Activated CD4-positive, alpha-beta T cell treated with anti-CD3 and anti-CD28 coated beads, Interleukin-2, amount 10 ng/mL, durations not matched to agents 24 days and 14 days (primary cell): ENCODE measurements at regions of chr4 and their contacts with region 1.

Region 1: GRCh38 chr4:41882625-41883347 is 52.4 kb upstream of the TMEM33 start:
- DNase-seq: peak; percentile 83
- H3K4me3 Mint-ChIP-seq: peak overlapping the region; percentile 23
- H3K27ac Mint-ChIP-seq: no peak overlapping the region
- H3K4me1 Mint-ChIP-seq: peaks cover 4% of the 10 kb centered on the region
- H3K27me3 Mint-ChIP-seq: peaks cover 60% of the 10 kb centered on the region

Region 2: GRCh38 chr4:41012293-41012692 is 870.5 kb before region 1 on chr4:
- intact Hi-C with region 1: no loop called
- DNase-seq: no peak
- H3K4me3 Mint-ChIP-seq: no peak overlapping the region
- H3K27ac Mint-ChIP-seq: no peak overlapping the region
- H3K4me1 Mint-ChIP-seq: no peaks in the 10 kb centered on the region
- H3K27me3 Mint-ChIP-seq: no peaks in the 10 kb centered on the region

Region 3: GRCh38 chr4:41281038-41281634 is 601.6 kb before region 1 on chr4:
- intact Hi-C with region 1: loop called (anchors 1 kb)
- DNase-seq: peak; percentile 81
- H3K4me3 Mint-ChIP-seq: no peak overlapping the region
- H3K27ac Mint-ChIP-seq: no peak overlapping the region
- H3K4me1 Mint-ChIP-seq: no peaks in the 10 kb centered on the region
- H3K27me3 Mint-ChIP-seq: no peaks in the 10 kb centered on the region

Region 4: DNA sequence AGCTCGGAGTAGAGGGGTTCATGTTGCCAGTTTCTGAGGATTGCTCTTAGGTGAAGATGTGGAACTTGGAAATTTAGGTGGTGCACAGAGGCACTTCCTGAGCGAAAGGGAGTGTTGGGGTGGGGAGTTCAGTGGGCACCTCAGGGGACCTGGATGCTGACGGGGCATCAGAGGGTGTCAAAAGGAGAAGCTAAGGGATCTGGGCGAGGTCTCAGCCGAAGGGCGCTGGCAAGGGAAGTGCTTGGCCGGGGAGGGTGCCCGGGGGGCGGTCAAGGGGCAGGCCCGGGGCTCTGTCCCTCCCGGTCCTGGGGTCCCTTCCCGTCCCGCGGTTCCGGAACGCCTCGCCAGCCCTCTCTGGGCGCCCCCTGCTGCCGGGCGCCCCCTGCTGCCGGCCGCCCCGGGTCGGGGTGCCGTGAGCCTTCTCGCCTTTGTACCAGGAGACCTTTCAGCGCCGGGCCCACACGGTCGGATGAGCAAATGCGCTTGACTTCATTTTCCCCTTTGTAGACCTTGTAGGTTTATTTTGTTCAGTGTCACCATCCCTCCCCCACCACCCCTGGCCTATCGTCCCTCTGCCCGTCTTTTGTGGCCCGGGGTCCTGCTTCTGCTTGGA is 131.2 kb before region 1 on chr4:
- intact Hi-C with region 1: loop called (anchors 2 kb)
- DNase-seq: no peak
- H3K4me3 Mint-ChIP-seq: no peak overlapping the region
- H3K27ac Mint-ChIP-seq: no peak overlapping the region
- H3K4me1 Mint-ChIP-seq: no peaks in the 10 kb centered on the region
- H3K27me3 Mint-ChIP-seq: peaks cover 75% of the 10 kb centered on the region

Region 5: DNA sequence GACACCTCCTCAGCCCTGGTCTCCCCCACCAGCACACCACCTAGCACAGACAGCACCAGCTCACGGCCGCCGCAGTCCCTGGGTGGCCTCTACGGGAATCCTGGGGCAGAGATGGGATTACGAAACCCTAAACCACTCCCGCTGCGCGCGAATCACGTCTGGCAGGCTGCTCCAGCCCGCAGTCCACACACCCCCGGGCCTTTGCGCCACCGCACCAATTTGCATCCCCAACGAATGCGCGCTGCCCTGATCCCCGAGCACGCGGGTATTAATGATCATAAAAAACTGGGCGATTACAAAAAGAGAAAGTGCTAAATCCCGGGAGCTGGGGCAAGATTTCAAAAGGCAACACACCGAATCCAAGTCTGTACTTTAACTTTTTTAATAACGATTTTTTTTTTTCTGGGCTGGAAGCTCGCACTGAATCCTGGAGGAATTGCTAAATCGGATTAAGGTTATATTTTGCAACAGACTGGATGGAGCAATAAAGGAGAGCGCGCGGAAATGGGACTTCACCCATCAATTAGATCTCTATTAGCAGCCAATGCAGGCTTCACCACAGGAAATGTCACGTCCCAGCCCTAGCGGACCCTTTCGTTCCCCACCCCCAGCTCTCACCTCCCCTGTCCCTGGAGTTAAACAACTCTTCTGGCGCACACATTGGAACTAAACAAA is 17.3 kb before region 1 on chr4:
- intact Hi-C with region 1: loop called (anchors 2 kb)
- DNase-seq: no peak
- H3K4me3 Mint-ChIP-seq: no peak overlapping the region
- H3K27ac Mint-ChIP-seq: no peak overlapping the region
- H3K4me1 Mint-ChIP-seq: peaks cover 3% of the 10 kb centered on the region
- H3K27me3 Mint-ChIP-seq: peaks cover 74% of the 10 kb centered on the region

Region 6: DNA sequence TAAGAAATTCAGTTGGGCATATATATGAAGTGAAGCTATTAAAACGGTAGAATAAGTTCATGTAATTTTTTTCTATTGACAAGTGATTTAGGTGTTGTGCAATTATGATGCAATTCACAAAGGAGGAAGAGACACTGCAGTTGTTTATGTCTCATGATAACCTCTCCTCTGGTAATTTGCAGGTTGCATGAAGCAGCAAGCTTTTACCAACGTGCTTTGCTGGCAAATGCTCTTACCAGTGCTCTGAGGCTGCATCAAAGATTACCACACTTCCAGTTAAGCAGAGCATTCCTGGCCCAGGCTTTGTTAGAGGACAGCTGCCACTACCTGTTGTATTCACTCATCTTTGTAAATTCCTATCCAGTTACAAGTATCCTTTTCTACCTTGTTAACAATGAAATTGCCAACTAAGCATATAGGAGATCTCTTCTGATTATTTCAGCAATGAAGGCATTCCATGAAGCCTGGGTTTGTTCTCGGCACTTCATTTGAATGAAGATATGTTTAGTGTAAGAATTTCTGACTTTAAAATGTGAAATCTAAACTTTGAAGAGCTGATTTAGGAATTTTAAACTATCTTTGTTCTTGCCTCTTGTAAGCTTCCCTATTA is 56.3 kb after region 1 on chr4:
- intact Hi-C with region 1: no loop called
- DNase-seq: no peak
- H3K4me3 Mint-ChIP-seq: no peak overlapping the region
- H3K27ac Mint-ChIP-seq: no peak overlapping the region
- H3K4me1 Mint-ChIP-seq: peaks cover 30% of the 10 kb centered on the region
- H3K27me3 Mint-ChIP-seq: no peaks in the 10 kb centered on the region

Region 7: DNA sequence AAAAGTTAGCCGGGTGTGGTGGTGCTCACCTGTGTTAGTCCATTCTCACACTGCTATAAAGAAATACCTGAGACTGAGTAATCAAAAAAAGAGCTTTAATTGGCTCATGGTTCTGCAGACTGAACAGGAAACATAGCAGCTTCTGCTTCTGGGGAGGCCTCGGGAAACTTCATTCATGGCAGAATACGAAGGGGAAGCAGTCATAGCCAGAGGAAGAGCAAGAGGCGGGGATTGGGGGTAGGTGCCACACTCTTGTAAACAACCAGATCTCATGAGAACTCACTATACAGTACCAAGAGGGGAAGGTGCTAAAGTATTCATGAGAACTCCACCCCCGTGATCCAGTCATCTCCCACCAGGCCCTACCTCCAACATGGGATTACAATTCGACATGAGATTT is 205.6 kb after region 1 on chr4:
- intact Hi-C with region 1: no loop called
- DNase-seq: no peak
- H3K4me3 Mint-ChIP-seq: no peak overlapping the region
- H3K27ac Mint-ChIP-seq: no peak overlapping the region
- H3K4me1 Mint-ChIP-seq: no peaks in the 10 kb centered on the region
- H3K27me3 Mint-ChIP-seq: no peaks in the 10 kb centered on the region

Region 8: DNA sequence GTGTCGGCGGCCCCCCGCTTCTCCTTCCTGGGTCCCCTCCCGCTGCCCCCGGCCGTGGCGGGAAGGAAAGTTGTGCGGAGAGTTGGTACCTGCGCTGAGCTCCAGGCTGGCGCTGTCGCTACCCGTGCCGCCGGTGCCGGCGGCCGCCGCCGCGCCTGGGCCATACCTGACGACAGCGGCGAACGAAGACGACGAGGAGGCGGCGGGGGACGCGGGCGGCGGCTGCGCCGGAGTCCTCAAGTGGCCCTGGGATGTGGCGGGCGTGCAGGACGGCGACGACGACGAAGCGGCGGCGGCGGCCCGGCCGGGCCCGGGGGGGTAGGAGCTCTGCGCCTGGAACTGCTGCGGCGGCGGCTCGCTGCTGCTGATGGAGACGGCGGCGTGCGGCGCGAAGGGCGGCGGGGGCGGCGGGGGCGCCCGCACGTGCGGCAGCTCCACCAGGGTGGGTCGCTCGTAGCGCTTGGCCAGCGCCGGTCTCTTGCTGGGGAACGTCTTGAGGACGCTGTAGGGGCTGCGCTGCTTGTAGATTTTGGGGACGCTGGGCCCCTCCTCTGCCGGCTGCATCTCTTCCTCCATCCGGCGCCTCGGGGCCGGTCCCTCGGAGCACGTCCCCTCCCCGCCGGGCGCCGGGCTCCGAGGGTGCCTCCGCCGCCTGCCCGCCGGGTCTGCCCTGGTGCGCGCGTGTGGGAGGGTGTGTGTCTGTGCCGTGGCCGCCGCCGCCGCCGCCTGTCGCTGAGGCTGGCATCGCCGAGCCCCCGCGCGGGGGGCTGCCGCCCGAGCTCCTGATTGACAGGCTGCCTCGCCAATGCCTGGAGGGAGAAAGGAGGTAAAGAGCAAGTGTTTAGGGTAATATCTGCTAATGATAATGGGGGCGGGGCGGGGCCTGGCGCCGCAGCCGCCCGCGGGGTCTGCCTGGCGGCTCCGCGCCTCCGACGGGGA is 269.1 kb after region 1 on chr4:
- intact Hi-C with region 1: loop called (anchors 5 kb)
- DNase-seq: peak; percentile 67
- H3K4me3 Mint-ChIP-seq: peak overlapping the region; percentile 72
- H3K27ac Mint-ChIP-seq: no peak overlapping the region
- H3K4me1 Mint-ChIP-seq: peaks cover 12% of the 10 kb centered on the region
- H3K27me3 Mint-ChIP-seq: peaks cover 49% of the 10 kb centered on the region

Region 9: GRCh38 chr4:42396752-42397634 is 514.2 kb after region 1 on chr4 and contains the start of gene SHISA3:
- intact Hi-C with region 1: loop called (anchors 2 kb)
- DNase-seq: peak; percentile 78
- H3K4me3 Mint-ChIP-seq: peak within 1 kb of the TSS; percentile 85
- H3K27ac Mint-ChIP-seq: no peak within 1 kb of the TSS
- H3K4me1 Mint-ChIP-seq: peaks cover 25% of the 10 kb centered on the region
- H3K27me3 Mint-ChIP-seq: peaks cover 65% of the 10 kb centered on the region
- total RNA-seq, gene SHISA3: 0.09 and 0.23 TPM in 2 replicates